GM12878 (cell line): ENCODE measurements at regions of chr4 and their contacts with region 1.

Region 1: DNA sequence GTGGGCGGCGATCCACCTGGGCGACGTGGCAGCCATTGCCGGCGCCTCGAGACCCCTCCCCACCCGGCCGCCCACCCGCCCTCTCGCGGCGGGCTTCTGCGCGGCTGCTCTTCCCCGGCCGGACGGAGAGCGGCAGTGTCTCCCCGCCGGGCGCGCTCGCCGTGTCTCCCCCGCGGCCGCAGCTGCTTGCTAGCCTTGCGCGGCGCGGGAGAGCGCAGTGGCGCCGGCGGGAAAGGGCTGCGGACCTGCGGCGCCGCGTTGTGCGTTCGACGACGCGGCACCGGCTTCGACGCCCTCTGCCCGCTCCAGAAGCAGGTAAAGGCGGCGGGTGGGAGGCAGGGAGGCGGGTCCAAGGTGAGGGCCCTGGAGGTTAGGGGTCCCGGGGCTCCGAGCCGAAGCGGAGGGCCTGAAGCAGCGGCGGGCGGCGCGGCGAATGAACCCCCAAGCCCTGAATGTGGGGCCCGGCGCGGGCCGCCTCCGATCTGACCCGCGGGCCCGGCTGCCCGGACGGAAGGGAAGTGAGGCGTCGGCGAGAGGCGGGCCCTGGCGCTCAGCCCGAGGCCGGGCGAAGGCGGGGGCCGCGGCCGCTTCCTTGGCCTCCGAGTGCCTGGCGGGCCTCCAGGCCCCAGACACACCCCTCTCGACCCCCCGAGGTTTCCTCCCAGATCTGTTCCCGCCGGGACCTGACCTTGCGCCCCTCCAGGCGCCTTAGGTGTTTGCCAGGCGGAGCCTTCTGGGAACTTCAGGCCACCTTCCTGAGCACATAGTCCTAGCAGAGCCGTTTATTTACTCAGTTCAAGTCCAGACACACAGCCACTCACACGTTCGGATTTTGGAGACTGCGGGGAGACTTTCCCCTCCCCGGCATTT is at the start of gene N4BP2:
- DNase-seq: peak; percentile 5
- ATAC-seq: peak; percentile 80
- H3K4me3 ChIP-seq: peak within 1 kb of the TSS; percentile 83
- H3K27ac ChIP-seq: peak within 1 kb of the TSS; percentile 80
- H3K4me1 ChIP-seq: peaks cover 10% of the 10 kb centered on the region
- H3K27me3 ChIP-seq: no peaks in the 10 kb centered on the region
- CTCF ChIP-seq: peak; percentile 73 to 97 (median 78)
- EP300 ChIP-seq: no peak
- POLR2A ChIP-seq: peak; percentile 80
- RAD21 ChIP-seq: peak; percentile 80
- polyA plus RNA-seq, gene N4BP2: 2.3 to 3.6 TPM

Region 2: GRCh38 chr4:40134203-40134917 is 77.4 kb after region 1 on chr4:
- CTCF ChIA-PET with region 1: no interaction called
- POLR2A ChIA-PET with region 1: no interaction called
- RAD21 ChIA-PET with region 1: no interaction called
- SMC1A ChIA-PET with region 1: interaction called, 4 read pairs
- in situ Hi-C with region 1: no loop called
- intact Hi-C with region 1: loop called (anchors 5 kb)
- DNase-seq: no peak
- ATAC-seq: peak; percentile 47
- H3K4me3 ChIP-seq: no peak overlapping the region
- H3K27ac ChIP-seq: no peak overlapping the region
- H3K4me1 ChIP-seq: no peaks in the 10 kb centered on the region
- H3K27me3 ChIP-seq: no peaks in the 10 kb centered on the region
- CTCF ChIP-seq: no peak
- EP300 ChIP-seq: no peak
- POLR2A ChIP-seq: no peak
- RAD21 ChIP-seq: no peak

Region 3: DNA sequence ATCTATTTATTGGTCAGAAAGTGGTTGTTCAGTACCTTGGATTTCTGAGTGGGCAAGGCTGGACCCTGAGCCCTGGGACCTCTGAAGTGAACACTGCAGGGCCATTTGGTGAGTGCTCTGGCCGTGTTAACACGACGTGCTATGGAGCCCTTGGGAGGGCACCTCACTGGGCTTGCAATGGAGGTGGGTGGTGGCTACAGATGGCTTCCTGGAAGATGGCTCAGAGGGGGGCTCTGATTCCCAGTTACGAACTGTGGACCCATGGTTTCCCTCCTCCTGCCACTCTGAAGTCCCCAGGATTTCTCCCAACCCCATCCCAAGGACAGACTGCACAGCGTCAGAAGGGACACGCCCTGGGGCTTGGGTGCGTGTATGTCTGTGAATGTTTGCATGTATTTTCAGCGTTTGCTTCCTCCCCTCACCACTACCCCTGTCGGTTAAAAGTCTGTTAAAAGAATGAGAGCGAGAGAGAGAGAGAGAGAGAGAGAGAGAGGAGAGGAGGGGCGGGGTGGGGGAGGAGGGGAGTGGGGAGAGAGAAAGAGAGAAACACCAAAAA is 136.1 kb after region 1 on chr4:
- CTCF ChIA-PET with region 1: interaction called, 4 read pairs
- POLR2A ChIA-PET with region 1: interaction called, 12 read pairs
- RAD21 ChIA-PET with region 1: interaction called, 9 read pairs
- SMC1A ChIA-PET with region 1: interaction called, 11 read pairs
- in situ Hi-C with region 1: no loop called
- intact Hi-C with region 1: no loop called
- DNase-seq: no peak
- ATAC-seq: peak; percentile 40
- H3K4me3 ChIP-seq: peak overlapping the region; percentile 88
- H3K27ac ChIP-seq: peak overlapping the region; percentile 92
- H3K4me1 ChIP-seq: peaks cover 9% of the 10 kb centered on the region
- H3K27me3 ChIP-seq: no peaks in the 10 kb centered on the region
- CTCF ChIP-seq: 0 out of 6 replicates have a peak, but pooled peaks of 1 of the 3 experiments have one; percentile 3
- EP300 ChIP-seq: 0 out of 4 replicates have a peak, but pooled peaks of 1 of the 2 experiments have one; percentile 25
- POLR2A ChIP-seq: peak; percentile 81
- RAD21 ChIP-seq: peak; percentile 17; the same call in 1 of the 2 replicates

Region 4: DNA sequence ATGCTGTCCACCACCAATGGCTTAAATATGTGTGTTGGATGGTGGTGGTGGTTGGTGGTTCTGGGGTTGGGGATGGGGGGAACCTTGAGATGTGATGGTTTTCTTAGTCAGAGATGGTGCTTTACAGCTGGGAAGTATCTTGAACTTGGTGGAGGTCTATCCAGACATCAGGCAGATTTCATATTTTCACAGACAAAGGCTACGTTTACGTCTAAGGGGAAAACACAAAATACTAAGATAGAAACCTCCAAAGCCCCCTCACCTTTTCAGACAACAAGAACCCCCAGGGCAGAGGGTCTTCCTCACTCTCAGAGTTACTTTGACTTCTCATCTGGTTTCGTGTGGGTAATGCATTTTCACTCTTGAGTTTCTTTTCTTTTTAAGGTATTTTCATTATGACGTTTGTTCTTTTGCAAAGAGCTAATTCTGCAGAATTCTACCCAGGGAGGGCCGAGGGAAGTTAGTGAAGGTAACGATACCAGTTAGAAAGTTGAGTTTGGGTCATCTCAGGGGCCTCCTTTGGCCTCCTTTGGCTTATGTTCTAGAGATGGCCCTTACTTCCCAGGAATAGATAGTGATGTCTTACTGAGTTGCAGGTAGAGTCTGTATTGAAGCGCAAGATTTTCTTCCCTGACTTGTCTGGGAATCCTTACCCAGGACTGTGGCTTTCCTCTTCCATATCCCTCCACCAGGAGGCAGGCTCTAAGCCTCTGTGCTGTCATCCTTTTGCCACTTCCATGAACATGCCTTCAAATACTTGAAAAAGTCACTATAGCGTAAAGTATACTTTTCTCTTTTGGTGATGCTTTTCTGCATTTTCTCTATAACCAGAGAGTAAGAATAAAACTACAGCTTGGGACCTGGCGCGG is 171.8 kb after region 1 on chr4:
- CTCF ChIA-PET with region 1: interaction called, 3 read pairs
- POLR2A ChIA-PET with region 1: interaction called, 8 read pairs
- RAD21 ChIA-PET with region 1: interaction called, 3 read pairs
- SMC1A ChIA-PET with region 1: interaction called, 3 read pairs
- in situ Hi-C with region 1: no loop called
- intact Hi-C with region 1: loop called (anchors 5 kb)
- DNase-seq: peak; percentile 77
- ATAC-seq: peak; percentile 56
- H3K4me3 ChIP-seq: peak overlapping the region; percentile 13; the same call in 1 of the 2 replicates
- H3K27ac ChIP-seq: peak overlapping the region; percentile 84
- H3K4me1 ChIP-seq: peaks cover 59% of the 10 kb centered on the region
- H3K27me3 ChIP-seq: no peaks in the 10 kb centered on the region
- CTCF ChIP-seq: peak; percentile 28 to 65 (median 45); a peak in 5 of 6 replicates
- EP300 ChIP-seq: peak in 1 of 2 experiments; percentile 66; a peak in 3 of 4 replicates
- POLR2A ChIP-seq: no peak
- RAD21 ChIP-seq: peak; percentile 44

Region 5: DNA sequence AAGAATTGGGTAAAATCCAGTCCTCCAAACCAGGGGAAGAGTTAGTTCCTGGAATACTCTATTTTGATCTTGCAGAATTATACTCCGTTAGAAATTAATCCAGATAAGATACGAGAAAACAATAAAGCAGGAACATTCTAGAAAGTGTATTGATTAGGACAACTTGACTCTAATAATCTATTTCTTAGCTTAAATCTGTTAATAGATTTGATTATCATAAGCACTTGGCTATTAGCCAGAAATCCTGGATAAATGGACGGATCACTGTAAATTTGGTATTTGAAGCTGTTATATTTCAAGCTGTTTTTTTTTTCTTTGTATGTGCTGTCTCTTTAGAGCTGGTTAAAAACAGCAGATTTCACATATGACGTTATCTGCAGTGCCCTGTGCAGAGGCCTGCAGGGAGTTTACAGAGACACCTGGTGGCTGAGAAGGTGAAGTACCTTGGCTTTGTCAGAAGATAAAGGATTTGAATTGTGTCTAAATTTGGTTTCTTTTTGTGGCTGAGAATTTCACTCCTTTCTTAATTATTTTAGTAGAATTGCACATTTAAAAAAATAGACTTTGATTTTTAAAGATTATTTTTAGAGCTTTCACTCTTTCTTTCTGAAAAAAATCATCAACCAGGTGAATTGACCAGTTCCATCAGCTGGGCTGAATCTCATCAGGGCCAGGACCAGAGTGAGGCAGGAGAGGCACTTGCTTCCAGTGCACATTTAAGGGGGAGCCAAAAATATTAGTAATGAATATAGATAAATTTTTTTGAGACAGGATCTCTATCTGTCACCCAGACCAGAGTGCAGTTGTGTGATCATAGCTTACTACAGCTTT is 268.5 kb after region 1 on chr4:
- CTCF ChIA-PET with region 1: interaction called, 23 read pairs
- POLR2A ChIA-PET with region 1: interaction called, 4 read pairs
- RAD21 ChIA-PET with region 1: interaction called, 26 read pairs
- SMC1A ChIA-PET with region 1: interaction called, 7 read pairs
- in situ Hi-C with region 1: no loop called
- intact Hi-C with region 1: loop called (anchors 1 kb)
- DNase-seq: no peak
- ATAC-seq: peak; percentile 98
- H3K4me3 ChIP-seq: no peak overlapping the region
- H3K27ac ChIP-seq: no peak overlapping the region
- H3K4me1 ChIP-seq: no peaks in the 10 kb centered on the region
- H3K27me3 ChIP-seq: no peaks in the 10 kb centered on the region
- CTCF ChIP-seq: peak; percentile 86 to 94 (median 89)
- EP300 ChIP-seq: no peak
- POLR2A ChIP-seq: no peak
- RAD21 ChIP-seq: peak; percentile 96

Region 6: GRCh38 chr4:40401631-40402030 is 344.7 kb after region 1 on chr4:
- CTCF ChIA-PET with region 1: no interaction called
- POLR2A ChIA-PET with region 1: no interaction called
- RAD21 ChIA-PET with region 1: no interaction called
- SMC1A ChIA-PET with region 1: no interaction called
- in situ Hi-C with region 1: no loop called
- intact Hi-C with region 1: no loop called
- DNase-seq: no peak
- ATAC-seq: no peak
- H3K4me3 ChIP-seq: no peak overlapping the region
- H3K27ac ChIP-seq: no peak overlapping the region
- H3K4me1 ChIP-seq: no peaks in the 10 kb centered on the region
- H3K27me3 ChIP-seq: no peaks in the 10 kb centered on the region
- CTCF ChIP-seq: no peak
- EP300 ChIP-seq: no peak
- POLR2A ChIP-seq: no peak
- RAD21 ChIP-seq: no peak

Region 7: DNA sequence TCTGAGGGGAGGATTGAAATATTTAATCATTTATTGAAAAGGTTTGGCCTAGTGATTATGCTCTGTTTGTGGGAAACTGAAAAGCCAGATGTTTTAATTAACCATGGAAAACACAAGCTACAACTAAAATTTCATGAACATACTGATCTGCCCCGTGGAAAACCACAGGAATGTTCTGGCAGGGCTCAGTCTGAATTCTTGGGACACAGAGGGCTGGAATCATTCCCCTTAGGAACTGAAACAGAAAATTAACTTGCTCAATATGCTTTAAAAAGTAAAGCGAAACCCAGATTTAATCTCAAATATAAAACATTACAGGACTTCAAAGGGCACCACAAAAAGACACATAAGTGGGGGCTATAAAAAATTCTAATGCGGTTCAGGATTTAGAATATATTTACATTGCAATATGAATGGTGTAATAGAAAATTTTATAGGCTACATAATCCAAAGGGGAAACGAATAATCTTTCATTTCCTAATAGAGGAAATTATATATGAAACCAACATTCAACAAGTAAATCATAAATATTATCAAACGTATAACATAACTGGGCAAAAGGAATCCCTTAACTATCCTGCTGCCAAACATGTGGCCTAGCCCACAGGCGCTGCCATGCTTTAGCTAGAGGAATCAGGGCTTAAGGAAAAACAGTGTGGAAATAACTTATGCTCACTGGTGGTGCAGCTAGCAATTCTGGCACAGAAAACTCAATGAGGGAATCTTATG is 1086.5 kb after region 1 on chr4:
- CTCF ChIA-PET with region 1: no interaction called
- POLR2A ChIA-PET with region 1: no interaction called
- RAD21 ChIA-PET with region 1: no interaction called
- SMC1A ChIA-PET with region 1: no interaction called
- in situ Hi-C with region 1: no loop called
- intact Hi-C with region 1: no loop called
- DNase-seq: no peak
- ATAC-seq: no peak
- H3K4me3 ChIP-seq: no peak overlapping the region
- H3K27ac ChIP-seq: no peak overlapping the region
- H3K4me1 ChIP-seq: peaks cover 21% of the 10 kb centered on the region
- H3K27me3 ChIP-seq: no peaks in the 10 kb centered on the region
- CTCF ChIP-seq: no peak
- EP300 ChIP-seq: no peak
- POLR2A ChIP-seq: no peak
- RAD21 ChIP-seq: no peak